CD4-positive, alpha-beta memory T cell (primary cell): ENCODE measurements at regions of chr17 and their contacts with region 1.

Region 1: DNA sequence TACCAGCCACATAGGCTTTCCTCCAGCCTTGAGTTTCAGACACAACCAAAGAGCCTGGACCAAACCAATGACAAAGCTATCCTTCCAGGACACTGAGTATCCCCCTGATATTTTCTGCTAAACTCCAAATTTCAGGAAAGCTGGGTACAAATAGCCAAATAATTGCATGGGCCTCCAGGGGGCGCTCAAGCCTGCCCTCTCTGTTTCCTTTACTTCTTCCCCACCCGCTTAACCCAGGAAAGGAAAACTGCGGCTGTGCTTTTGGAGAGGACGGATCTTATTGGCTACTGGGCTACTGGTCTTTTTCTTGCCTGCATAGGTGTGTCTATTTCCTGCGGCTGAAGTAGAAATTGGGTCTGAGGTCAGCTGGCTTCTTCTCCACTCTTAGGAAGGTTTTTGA is 30.1 kb downstream of the GNGT2 start:
- DNase-seq: peak; percentile 44 to 59 (median 56)
- H3K4me3 ChIP-seq: no peak overlapping the region
- H3K4me3 Mint-ChIP-seq: peak overlapping the region in 2 of 8 donors; percentile 13 to 50
- H3K27ac ChIP-seq: no peak overlapping the region
- H3K27ac Mint-ChIP-seq: peak overlapping the region in 1 of 7 donors; percentile 54
- H3K4me1 ChIP-seq: peaks cover 4% of the 10 kb centered on the region
- H3K4me1 Mint-ChIP-seq: peaks cover 0 to 3% (median 2%) of the 10 kb centered on the region in 4 donors
- H3K27me3 ChIP-seq: no peaks in the 10 kb centered on the region
- H3K27me3 Mint-ChIP-seq: peaks cover 4% of the 10 kb centered on the region in 2 donors

Region 2: GRCh38 chr17:49132699-49133364 is 47.5 kb before region 1 on chr17 and contains the start of gene B4GALNT2:
- CTCF ChIA-PET with region 1: no interaction called
- POLR2A ChIA-PET with region 1: no interaction called
- intact Hi-C with region 1: no loop called
- DNase-seq: peak in 2 of 5 donors; percentile 6
- H3K4me3 ChIP-seq: no peak within 1 kb of the TSS
- H3K4me3 Mint-ChIP-seq: peak within 1 kb of the TSS; percentile 62 to 80 (median 71)
- H3K27ac ChIP-seq: no peak within 1 kb of the TSS
- H3K27ac Mint-ChIP-seq: no peak within 1 kb of the TSS
- H3K4me1 ChIP-seq: peaks cover 11% of the 10 kb centered on the region
- H3K4me1 Mint-ChIP-seq: peaks cover 3 to 14% (median 8%) of the 10 kb centered on the region in 4 donors
- H3K27me3 ChIP-seq: peaks cover 17% of the 10 kb centered on the region
- H3K27me3 Mint-ChIP-seq: peaks cover 36 to 44% of the 10 kb centered on the region in 2 donors
- total RNA-seq, gene B4GALNT2: 0.06 TPM

Region 3: GRCh38 chr17:49197346-49197998 is 17.2 kb after region 1 on chr17:
- CTCF ChIA-PET with region 1: interaction called, 54 read pairs
- POLR2A ChIA-PET with region 1: interaction called, 5 read pairs
- intact Hi-C with region 1: loop called (anchors 1 kb)
- DNase-seq: no peak
- H3K4me3 ChIP-seq: no peak overlapping the region
- H3K4me3 Mint-ChIP-seq: no peak overlapping the region
- H3K27ac ChIP-seq: no peak overlapping the region
- H3K27ac Mint-ChIP-seq: peak overlapping the region in 1 of 7 donors; percentile 65
- H3K4me1 ChIP-seq: peaks cover 8% of the 10 kb centered on the region
- H3K4me1 Mint-ChIP-seq: peaks cover 4 to 22% (median 8%) of the 10 kb centered on the region in 4 donors
- H3K27me3 ChIP-seq: no peaks in the 10 kb centered on the region
- H3K27me3 Mint-ChIP-seq: peaks cover 0 to 4% of the 10 kb centered on the region in 2 donors

Region 4: GRCh38 chr17:49217651-49218413 is 37.5 kb after region 1 on chr17:
- CTCF ChIA-PET with region 1: interaction called, 35 read pairs
- POLR2A ChIA-PET with region 1: no interaction called
- intact Hi-C with region 1: no loop called
- DNase-seq: peak; percentile 74 to 84 (median 83)
- H3K4me3 ChIP-seq: peak overlapping the region in 1 of 2 donors; percentile 22
- H3K4me3 Mint-ChIP-seq: peak overlapping the region; percentile 70 to 92 (median 84)
- H3K27ac ChIP-seq: peak overlapping the region; percentile 34
- H3K27ac Mint-ChIP-seq: peak overlapping the region; percentile 87 to 99 (median 96)
- H3K4me1 ChIP-seq: peaks cover 79% of the 10 kb centered on the region
- H3K4me1 Mint-ChIP-seq: peaks cover 49 to 76% (median 58%) of the 10 kb centered on the region in 4 donors
- H3K27me3 ChIP-seq: no peaks in the 10 kb centered on the region
- H3K27me3 Mint-ChIP-seq: no peaks in the 10 kb centered on the region

Region 5: DNA sequence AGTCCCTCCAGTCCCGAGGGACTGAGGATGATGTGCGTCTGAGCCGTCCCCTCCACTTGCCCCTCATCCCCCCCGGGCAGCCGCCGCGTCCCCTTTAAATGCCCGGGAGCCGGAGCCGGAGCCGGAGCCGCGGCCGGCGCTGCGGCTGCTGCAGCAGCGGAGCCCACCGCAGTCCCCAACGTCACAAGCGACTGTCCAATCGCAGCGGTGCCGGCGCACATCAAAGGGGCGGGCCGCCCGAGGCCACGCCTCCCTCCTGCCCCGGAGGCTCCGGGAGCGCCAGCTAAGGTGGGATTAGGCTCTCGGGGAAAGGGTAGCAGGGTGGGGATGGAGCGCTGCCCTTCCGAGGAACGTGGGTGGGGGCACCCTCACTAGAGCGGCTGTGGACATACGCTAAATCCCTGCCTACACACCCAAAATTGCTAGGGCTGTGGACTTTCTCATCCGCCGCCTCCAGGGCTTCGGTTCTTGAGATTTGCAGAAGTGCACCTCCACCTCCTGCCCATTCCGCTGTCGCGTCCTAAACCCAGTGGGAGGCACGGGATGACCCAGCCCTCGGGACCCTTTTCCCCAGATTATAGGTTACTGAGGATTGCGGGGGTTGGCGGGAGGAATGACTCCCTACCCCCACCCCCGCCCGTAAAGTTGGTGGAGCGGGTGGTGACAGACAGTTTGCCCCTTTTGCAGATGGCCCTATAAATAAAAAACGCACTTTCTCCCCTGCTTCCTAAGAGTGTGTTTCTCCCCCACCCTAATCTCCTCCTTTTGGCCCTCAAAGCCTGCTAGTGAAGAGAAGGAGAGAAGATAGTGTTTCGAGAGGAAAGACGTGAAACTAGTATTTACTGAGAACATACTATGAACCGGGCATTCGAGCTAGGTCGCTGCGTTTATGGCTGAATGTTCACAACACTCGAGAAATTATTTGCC is 50.6 kb after region 1 on chr17 and contains the start of gene PHOSPHO1:
- CTCF ChIA-PET with region 1: interaction called, 315 read pairs
- POLR2A ChIA-PET with region 1: interaction called, 9 read pairs
- intact Hi-C with region 1: loop called (anchors 1 kb)
- DNase-seq: peak; percentile 83 to 87 (median 84)
- H3K4me3 ChIP-seq: peak within 1 kb of the TSS; percentile 62 to 88
- H3K4me3 Mint-ChIP-seq: peak within 1 kb of the TSS; percentile 81 to 95 (median 86)
- H3K27ac ChIP-seq: no peak within 1 kb of the TSS
- H3K27ac Mint-ChIP-seq: peak within 1 kb of the TSS; percentile 35 to 96 (median 78)
- H3K4me1 ChIP-seq: peaks cover 17% of the 10 kb centered on the region
- H3K4me1 Mint-ChIP-seq: peaks cover 8 to 24% (median 13%) of the 10 kb centered on the region in 4 donors
- H3K27me3 ChIP-seq: peaks cover 16% of the 10 kb centered on the region
- H3K27me3 Mint-ChIP-seq: peaks cover 7 to 12% of the 10 kb centered on the region in 2 donors
- total RNA-seq, gene PHOSPHO1: not detected